ENCODE measurements at regions of chr12 and their contacts with region 1.

Region 1: DNA sequence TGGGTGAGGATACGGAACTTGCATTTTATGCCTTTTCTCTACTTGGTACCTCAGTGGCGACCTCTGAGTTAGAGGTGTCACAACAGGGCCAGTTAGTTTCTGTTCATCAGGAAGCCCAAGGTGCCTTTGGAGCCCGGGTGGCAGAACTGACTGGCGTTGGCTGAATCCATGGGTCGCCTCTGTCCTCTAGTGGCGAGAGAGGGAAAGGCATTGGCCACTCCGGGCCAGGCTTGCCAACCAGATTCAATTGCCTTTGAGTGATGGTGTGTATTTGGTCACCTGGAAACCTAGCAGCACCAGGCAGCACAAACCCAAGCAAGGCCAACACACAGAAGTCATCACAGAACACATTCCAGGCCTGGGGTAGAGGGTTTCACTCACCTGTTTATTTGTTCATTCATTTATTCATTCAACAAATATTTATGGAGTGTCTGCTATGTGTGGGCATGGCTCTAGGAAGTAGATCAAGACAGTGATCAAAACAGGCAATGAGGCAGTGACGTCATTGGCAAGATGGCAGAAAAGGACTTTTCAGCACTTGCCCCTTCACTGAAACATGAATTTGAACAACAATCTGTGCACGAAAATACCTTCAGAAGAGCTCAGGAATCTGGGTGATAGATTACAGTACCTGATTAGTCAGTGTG is 40.5 kb upstream of the KCNA5 start:
- DNase-seq: peak; percentile 50
- ATAC-seq: peak; percentile 98
- H3K4me3 ChIP-seq: no peak overlapping the region
- H3K27ac ChIP-seq: no peak overlapping the region
- H3K4me1 ChIP-seq: no peaks in the 10 kb centered on the region
- H3K27me3 ChIP-seq: peaks cover 13% of the 10 kb centered on the region
- CTCF ChIP-seq: peak; percentile 95
- POLR2A ChIP-seq: no peak
- RAD21 ChIP-seq: peak; percentile 95

Region 2: GRCh38 chr12:4809013-4809448 is 194.1 kb before region 1 on chr12:
- CTCF ChIA-PET with region 1: no interaction called
- POLR2A ChIA-PET with region 1: no interaction called
- dilution Hi-C with region 1: no loop called
- in situ Hi-C with region 1: no loop called
- intact Hi-C with region 1: no loop called
- DNase-seq: no peak
- ATAC-seq: no peak
- H3K4me3 ChIP-seq: no peak overlapping the region
- H3K27ac ChIP-seq: no peak overlapping the region
- H3K4me1 ChIP-seq: no peaks in the 10 kb centered on the region
- H3K27me3 ChIP-seq: peaks cover 24% of the 10 kb centered on the region
- CTCF ChIP-seq: no peak
- POLR2A ChIP-seq: no peak
- RAD21 ChIP-seq: no peak

Region 3: GRCh38 chr12:4956054-4956453 is 47.1 kb before region 1 on chr12:
- CTCF ChIA-PET with region 1: no interaction called
- POLR2A ChIA-PET with region 1: no interaction called
- dilution Hi-C with region 1: no loop called
- in situ Hi-C with region 1: no loop called
- intact Hi-C with region 1: loop called (anchors 2 kb)
- DNase-seq: no peak
- ATAC-seq: no peak
- H3K4me3 ChIP-seq: no peak overlapping the region
- H3K27ac ChIP-seq: no peak overlapping the region
- H3K4me1 ChIP-seq: no peaks in the 10 kb centered on the region
- H3K27me3 ChIP-seq: peaks cover 8% of the 10 kb centered on the region; the same call in 1 of the 2 replicates
- CTCF ChIP-seq: no peak
- POLR2A ChIP-seq: no peak
- RAD21 ChIP-seq: no peak

Region 4: GRCh38 chr12:5200278-5201087 is 197.3 kb after region 1 on chr12:
- CTCF ChIA-PET with region 1: no interaction called
- POLR2A ChIA-PET with region 1: no interaction called
- dilution Hi-C with region 1: no loop called
- in situ Hi-C with region 1: no loop called
- intact Hi-C with region 1: no loop called
- DNase-seq: peak; percentile 28
- ATAC-seq: peak; percentile 69
- H3K4me3 ChIP-seq: no peak overlapping the region
- H3K27ac ChIP-seq: no peak overlapping the region
- H3K4me1 ChIP-seq: peaks cover 4% of the 10 kb centered on the region; the same call in 1 of the 2 replicates
- H3K27me3 ChIP-seq: no peaks in the 10 kb centered on the region
- CTCF ChIP-seq: peak; percentile 58
- POLR2A ChIP-seq: no peak
- RAD21 ChIP-seq: peak; percentile 66